MCF 10A (cell line): ENCODE measurements at regions of chr4 and their contacts with region 1.

Region 1: DNA sequence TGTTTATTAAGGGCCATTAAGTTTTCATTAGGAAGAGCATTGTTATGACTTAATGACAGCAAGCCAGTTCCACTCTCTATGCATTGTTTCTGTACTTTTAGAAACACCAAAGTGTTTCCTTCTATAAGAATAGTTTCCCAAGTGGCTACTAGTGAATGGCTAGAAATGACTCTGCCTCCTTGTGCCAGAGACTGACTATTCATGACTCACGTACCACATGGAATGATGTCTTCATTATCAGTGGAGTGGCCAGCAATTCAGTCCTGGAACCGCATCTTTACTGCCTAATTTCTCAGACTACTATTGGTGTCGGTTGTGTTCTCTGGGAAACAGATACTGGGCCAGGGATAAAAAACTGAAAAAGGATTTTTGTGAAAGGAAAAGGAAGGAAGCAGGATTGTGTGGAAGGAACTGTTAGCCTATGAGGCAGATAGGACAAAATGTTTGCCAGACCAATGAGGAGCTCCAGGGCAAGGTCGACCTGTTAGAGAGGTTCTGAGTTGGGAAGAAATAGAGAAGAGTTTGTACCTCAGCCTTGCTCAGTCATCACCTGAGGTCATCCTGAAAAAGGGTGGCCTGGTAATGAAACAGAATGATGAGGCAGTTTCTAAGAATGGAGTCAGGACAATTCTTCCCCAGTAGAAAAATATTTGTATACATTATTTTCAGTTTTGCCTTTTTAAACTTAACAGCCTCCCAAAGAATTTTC is 218.6 kb downstream of the SPCS3 start:
- DNase-seq: peak; percentile 83
- H3K4me3 Mint-ChIP-seq: no peak overlapping the region
- H3K27ac Mint-ChIP-seq: peak overlapping the region; percentile 89
- H3K4me1 Mint-ChIP-seq: peaks cover 14% of the 10 kb centered on the region
- H3K27me3 Mint-ChIP-seq: no peaks in the 10 kb centered on the region
- CTCF ChIP-seq: no peak

Region 2: GRCh38 chr4:176377780-176378179 is 160.6 kb before region 1 on chr4:
- CTCF ChIA-PET with region 1: interaction called, 4 read pairs
- POLR2A ChIA-PET with region 1: no interaction called
- intact Hi-C with region 1: loop called (anchors 10 kb)
- DNase-seq: peak; percentile 40
- H3K4me3 Mint-ChIP-seq: no peak overlapping the region
- H3K27ac Mint-ChIP-seq: no peak overlapping the region
- H3K4me1 Mint-ChIP-seq: peaks cover 8% of the 10 kb centered on the region
- H3K27me3 Mint-ChIP-seq: no peaks in the 10 kb centered on the region
- CTCF ChIP-seq: peak; percentile 72

Region 3: GRCh38 chr4:176400816-176401461 is 137.4 kb before region 1 on chr4:
- CTCF ChIA-PET with region 1: interaction called, 3 read pairs
- POLR2A ChIA-PET with region 1: no interaction called
- intact Hi-C with region 1: loop called (anchors 10 kb)
- DNase-seq: peak; percentile 51
- H3K4me3 Mint-ChIP-seq: no peak overlapping the region
- H3K27ac Mint-ChIP-seq: peak overlapping the region; percentile 43
- H3K4me1 Mint-ChIP-seq: peaks cover 13% of the 10 kb centered on the region
- H3K27me3 Mint-ChIP-seq: no peaks in the 10 kb centered on the region
- CTCF ChIP-seq: no peak

Region 4: DNA sequence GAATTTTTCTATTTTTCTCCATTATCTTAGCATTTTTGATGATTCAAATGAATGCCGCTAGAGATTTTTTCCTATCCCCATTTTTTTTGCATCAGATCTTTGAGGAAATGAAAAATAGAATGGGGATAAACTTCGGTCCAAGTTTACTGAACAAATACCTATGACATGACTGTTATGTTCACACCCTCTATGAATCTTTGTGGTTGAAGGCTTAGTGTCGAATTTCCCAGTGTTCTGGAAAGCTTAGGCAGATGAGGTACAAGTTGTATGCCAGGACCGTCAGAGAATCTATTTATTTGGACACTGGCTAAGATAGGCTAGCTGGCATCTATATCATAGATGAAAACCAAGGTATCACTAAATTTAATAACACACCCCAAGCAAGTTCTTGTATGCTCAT is 95.3 kb before region 1 on chr4:
- CTCF ChIA-PET with region 1: interaction called, 3 read pairs
- POLR2A ChIA-PET with region 1: no interaction called
- intact Hi-C with region 1: loop called (anchors 5 kb)
- DNase-seq: peak; percentile 90
- H3K4me3 Mint-ChIP-seq: peak overlapping the region; percentile 61
- H3K27ac Mint-ChIP-seq: peak overlapping the region; percentile 96
- H3K4me1 Mint-ChIP-seq: peaks cover 34% of the 10 kb centered on the region
- H3K27me3 Mint-ChIP-seq: no peaks in the 10 kb centered on the region
- CTCF ChIP-seq: no peak

Region 5: DNA sequence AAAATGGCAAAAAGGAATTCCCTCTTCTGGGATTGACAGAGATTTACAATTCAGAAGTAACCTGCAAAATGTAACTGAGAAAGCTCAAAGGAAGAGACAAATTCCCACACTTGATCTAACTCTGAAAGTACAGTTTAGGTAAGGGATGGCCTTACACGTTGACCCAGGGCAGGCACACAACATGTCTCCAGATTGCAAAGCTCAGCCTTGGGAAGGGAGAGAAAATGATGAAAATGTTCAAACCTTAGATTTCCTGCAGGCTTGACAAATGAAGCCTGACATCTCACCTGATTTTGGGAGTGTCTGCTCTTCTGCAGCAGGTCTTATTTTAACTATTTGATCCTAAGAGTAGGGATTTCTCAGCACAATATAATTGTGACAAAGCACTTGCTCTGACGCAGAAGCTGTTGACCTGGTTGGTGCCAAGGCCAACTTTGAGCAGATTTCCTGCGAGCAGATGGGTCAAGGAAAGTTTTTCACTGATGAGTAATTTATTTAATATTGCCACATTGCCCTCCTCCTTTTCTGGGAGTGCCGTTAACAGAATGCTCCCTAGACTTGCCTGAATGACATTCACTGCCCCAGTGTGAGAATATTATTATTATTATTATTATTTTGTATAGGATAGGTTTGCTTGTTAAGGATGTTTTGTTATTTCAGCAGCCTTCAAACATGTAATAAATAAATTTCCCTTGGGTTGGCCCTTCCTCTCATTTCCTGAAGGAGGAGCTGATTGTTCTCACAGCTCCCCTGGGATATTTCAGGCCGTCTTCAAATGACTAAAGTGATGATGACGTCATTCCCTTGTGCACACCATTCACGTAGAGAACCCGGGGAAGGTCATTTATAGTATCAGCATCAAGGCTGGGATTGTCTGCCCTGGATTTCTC is 97.2 kb after region 1 on chr4:
- CTCF ChIA-PET with region 1: no interaction called
- POLR2A ChIA-PET with region 1: interaction called, 3 read pairs
- intact Hi-C with region 1: loop called (anchors 5 kb)
- DNase-seq: peak; percentile 92
- H3K4me3 Mint-ChIP-seq: peak overlapping the region; percentile 6
- H3K27ac Mint-ChIP-seq: peak overlapping the region; percentile 85
- H3K4me1 Mint-ChIP-seq: peaks cover 38% of the 10 kb centered on the region
- H3K27me3 Mint-ChIP-seq: no peaks in the 10 kb centered on the region
- CTCF ChIP-seq: peak; percentile 18